ENCODE measurements at regions of chr18 and their contacts with region 1.

Region 1: DNA sequence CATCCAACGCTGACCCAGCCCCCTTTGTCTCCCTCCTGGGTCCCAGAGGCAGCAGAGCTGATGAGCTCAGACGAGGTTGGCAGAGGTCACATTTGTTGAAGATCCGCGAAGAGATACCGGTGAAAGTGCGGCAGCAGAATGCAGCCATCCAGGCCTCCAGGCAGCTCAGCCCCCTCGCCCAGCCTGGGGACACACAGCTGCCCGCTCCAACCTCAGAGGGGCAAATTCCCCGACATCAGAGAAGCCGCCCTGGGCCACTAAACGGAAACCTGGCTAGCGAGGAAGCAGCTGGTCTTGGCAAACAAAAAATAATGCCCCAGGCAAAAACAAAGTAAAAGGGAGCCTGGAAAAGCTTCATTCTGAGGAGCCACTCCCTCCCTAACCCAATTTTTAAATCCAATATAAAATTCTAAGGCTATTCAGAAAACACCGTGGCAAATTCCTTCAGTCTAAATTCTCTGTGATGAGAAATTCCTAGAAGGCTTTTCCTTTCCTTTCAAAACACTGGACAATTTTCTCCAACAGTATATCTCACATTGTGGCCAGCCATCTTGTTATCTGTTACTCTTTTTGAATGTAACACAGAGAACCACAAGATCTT is 262.4 kb downstream of the SS18 start:
- DNase-seq: no peak
- ATAC-seq: no peak
- H3K4me3 ChIP-seq: no peak overlapping the region
- H3K4me3 Mint-ChIP-seq: no peak overlapping the region
- H3K27ac ChIP-seq: no peak overlapping the region
- H3K27ac Mint-ChIP-seq: no peak overlapping the region
- H3K4me1 ChIP-seq: no peaks in the 10 kb centered on the region
- H3K4me1 Mint-ChIP-seq: no peaks in the 10 kb centered on the region
- H3K27me3 ChIP-seq: no peaks in the 10 kb centered on the region
- H3K27me3 Mint-ChIP-seq: no peaks in the 10 kb centered on the region
- CTCF ChIP-seq: no peak

Region 2: GRCh38 chr18:25805323-25805722 is 22.7 kb before region 1 on chr18:
- CTCF ChIA-PET with region 1: no interaction called
- POLR2A ChIA-PET with region 1: no interaction called
- intact Hi-C with region 1: loop called in 1 of 2 experiments (anchors 1 kb)
- DNase-seq: no peak
- ATAC-seq: no peak
- H3K4me3 ChIP-seq: no peak overlapping the region
- H3K4me3 Mint-ChIP-seq: no peak overlapping the region
- H3K27ac ChIP-seq: no peak overlapping the region
- H3K27ac Mint-ChIP-seq: no peak overlapping the region
- H3K4me1 ChIP-seq: no peaks in the 10 kb centered on the region
- H3K4me1 Mint-ChIP-seq: no peaks in the 10 kb centered on the region
- H3K27me3 ChIP-seq: no peaks in the 10 kb centered on the region
- H3K27me3 Mint-ChIP-seq: peaks cover 3% of the 10 kb centered on the region
- CTCF ChIP-seq: no peak